GM12878 (cell line): ENCODE measurements at regions of chr2 and their contacts with region 1.

Region 1: GRCh38 chr2:111194835-111195621 is 74.3 kb downstream of the BCL2L11 start:
- DNase-seq: peak; percentile 98
- ATAC-seq: peak; percentile 88
- H3K4me3 ChIP-seq: no peak overlapping the region
- H3K27ac ChIP-seq: peak overlapping the region; percentile 41; the same call in 1 of the 2 replicates
- H3K4me1 ChIP-seq: peaks cover 36% of the 10 kb centered on the region
- H3K27me3 ChIP-seq: no peaks in the 10 kb centered on the region
- CTCF ChIP-seq: peak; percentile 42 to 46 (median 45); a peak in 5 of 6 replicates
- EP300 ChIP-seq: peak; percentile 76 to 96
- POLR2A ChIP-seq: no peak
- RAD21 ChIP-seq: peak; percentile 47

Region 2: GRCh38 chr2:111148925-111149324 is 46.1 kb before region 1 on chr2:
- CTCF ChIA-PET with region 1: interaction called, 8 read pairs
- POLR2A ChIA-PET with region 1: interaction called, 3 read pairs
- RAD21 ChIA-PET with region 1: interaction called, 17 read pairs
- SMC1A ChIA-PET with region 1: interaction called, 42 read pairs
- in situ Hi-C with region 1: no loop called
- intact Hi-C with region 1: no loop called
- DNase-seq: no peak
- ATAC-seq: no peak
- H3K4me3 ChIP-seq: no peak overlapping the region
- H3K27ac ChIP-seq: no peak overlapping the region
- H3K4me1 ChIP-seq: peaks cover 6% of the 10 kb centered on the region
- H3K27me3 ChIP-seq: no peaks in the 10 kb centered on the region
- CTCF ChIP-seq: no peak
- EP300 ChIP-seq: no peak
- POLR2A ChIP-seq: no peak
- RAD21 ChIP-seq: no peak

Region 3: GRCh38 chr2:111157798-111158197 is 37.2 kb before region 1 on chr2:
- CTCF ChIA-PET with region 1: interaction called, 4 read pairs
- POLR2A ChIA-PET with region 1: interaction called, 11 read pairs
- RAD21 ChIA-PET with region 1: interaction called, 34 read pairs
- SMC1A ChIA-PET with region 1: interaction called, 18 read pairs
- in situ Hi-C with region 1: no loop called
- intact Hi-C with region 1: no loop called
- DNase-seq: peak; percentile 69
- ATAC-seq: peak; percentile 82
- H3K4me3 ChIP-seq: no peak overlapping the region
- H3K27ac ChIP-seq: no peak overlapping the region
- H3K4me1 ChIP-seq: peaks cover 19% of the 10 kb centered on the region
- H3K27me3 ChIP-seq: no peaks in the 10 kb centered on the region
- CTCF ChIP-seq: peak; percentile 19 to 27 (median 22); a peak in 3 of 6 replicates
- EP300 ChIP-seq: no peak
- POLR2A ChIP-seq: no peak
- RAD21 ChIP-seq: no peak

Region 4: DNA sequence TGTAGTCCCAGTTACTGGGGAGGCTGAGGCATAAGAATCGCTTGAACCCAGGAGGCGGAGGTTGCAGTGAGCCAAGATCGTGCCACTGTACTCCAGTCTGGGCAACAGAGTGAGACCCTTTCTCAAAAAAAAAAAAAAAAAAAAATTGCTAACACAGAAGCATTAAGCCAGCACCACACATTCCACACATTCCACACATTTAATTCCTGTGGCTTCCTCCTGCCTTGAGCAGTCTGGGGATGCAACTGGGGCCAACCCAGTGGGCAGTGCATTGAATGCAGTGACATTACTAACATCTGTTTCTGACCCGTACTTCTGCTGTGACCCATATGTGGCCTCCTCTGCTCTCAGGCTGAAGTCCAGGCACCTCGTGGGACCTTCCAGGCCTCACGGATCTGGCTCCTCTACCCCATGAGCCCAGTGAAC is 32.7 kb after region 1 on chr2:
- CTCF ChIA-PET with region 1: interaction called, 3 read pairs
- POLR2A ChIA-PET with region 1: no interaction called
- RAD21 ChIA-PET with region 1: interaction called, 6 read pairs
- SMC1A ChIA-PET with region 1: interaction called, 108 read pairs
- in situ Hi-C with region 1: no loop called
- intact Hi-C with region 1: no loop called
- DNase-seq: no peak
- ATAC-seq: no peak
- H3K4me3 ChIP-seq: no peak overlapping the region
- H3K27ac ChIP-seq: no peak overlapping the region
- H3K4me1 ChIP-seq: peaks cover 5% of the 10 kb centered on the region; the same call in 1 of the 2 replicates
- H3K27me3 ChIP-seq: no peaks in the 10 kb centered on the region
- CTCF ChIP-seq: no peak
- EP300 ChIP-seq: no peak
- POLR2A ChIP-seq: no peak
- RAD21 ChIP-seq: no peak

Region 5: DNA sequence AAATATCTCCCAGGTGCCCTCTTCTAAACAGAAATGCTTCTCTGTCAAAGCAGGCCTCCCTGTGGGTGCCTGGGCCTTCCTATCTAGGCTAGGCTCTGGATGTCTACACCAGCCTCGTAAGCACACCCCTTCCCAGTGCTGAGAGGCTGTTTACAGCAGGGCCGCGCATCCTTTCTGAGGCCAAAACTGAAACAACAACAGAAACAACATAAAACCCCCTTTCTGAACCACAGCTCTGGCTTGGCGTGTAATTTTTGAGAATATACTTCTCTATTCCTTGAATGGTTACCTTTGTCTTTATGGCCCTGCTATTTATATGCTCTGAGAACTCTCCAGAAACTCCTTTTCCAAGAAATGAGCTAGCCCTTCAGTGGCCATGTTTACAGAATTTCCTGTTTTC is 44.1 kb after region 1 on chr2:
- CTCF ChIA-PET with region 1: interaction called, 4 read pairs
- POLR2A ChIA-PET with region 1: interaction called, 5 read pairs
- RAD21 ChIA-PET with region 1: interaction called, 9 read pairs
- SMC1A ChIA-PET with region 1: interaction called, 15 read pairs
- in situ Hi-C with region 1: no loop called
- intact Hi-C with region 1: no loop called
- DNase-seq: no peak
- ATAC-seq: peak; percentile 100
- H3K4me3 ChIP-seq: no peak overlapping the region
- H3K27ac ChIP-seq: no peak overlapping the region
- H3K4me1 ChIP-seq: peaks cover 9% of the 10 kb centered on the region
- H3K27me3 ChIP-seq: no peaks in the 10 kb centered on the region
- CTCF ChIP-seq: no peak
- EP300 ChIP-seq: peak in 1 of 2 experiments; percentile 57; a peak in 1 of 4 replicates
- POLR2A ChIP-seq: no peak
- RAD21 ChIP-seq: no peak